ENCODE measurements at regions of chr17 and their contacts with region 1.

Region 1: GRCh38 chr17:65561394-65562205 is at the start of gene AXIN2:
- DNase-seq: peak; percentile 80
- H3K4me3 Mint-ChIP-seq: peak within 1 kb of the TSS; percentile 86
- H3K27ac Mint-ChIP-seq: peak within 1 kb of the TSS; percentile 52
- H3K4me1 Mint-ChIP-seq: peaks cover 31% of the 10 kb centered on the region
- H3K27me3 Mint-ChIP-seq: peaks cover 21% of the 10 kb centered on the region
- total RNA-seq, gene AXIN2: 4.9 and 5.6 TPM in 2 replicates

Region 2: DNA sequence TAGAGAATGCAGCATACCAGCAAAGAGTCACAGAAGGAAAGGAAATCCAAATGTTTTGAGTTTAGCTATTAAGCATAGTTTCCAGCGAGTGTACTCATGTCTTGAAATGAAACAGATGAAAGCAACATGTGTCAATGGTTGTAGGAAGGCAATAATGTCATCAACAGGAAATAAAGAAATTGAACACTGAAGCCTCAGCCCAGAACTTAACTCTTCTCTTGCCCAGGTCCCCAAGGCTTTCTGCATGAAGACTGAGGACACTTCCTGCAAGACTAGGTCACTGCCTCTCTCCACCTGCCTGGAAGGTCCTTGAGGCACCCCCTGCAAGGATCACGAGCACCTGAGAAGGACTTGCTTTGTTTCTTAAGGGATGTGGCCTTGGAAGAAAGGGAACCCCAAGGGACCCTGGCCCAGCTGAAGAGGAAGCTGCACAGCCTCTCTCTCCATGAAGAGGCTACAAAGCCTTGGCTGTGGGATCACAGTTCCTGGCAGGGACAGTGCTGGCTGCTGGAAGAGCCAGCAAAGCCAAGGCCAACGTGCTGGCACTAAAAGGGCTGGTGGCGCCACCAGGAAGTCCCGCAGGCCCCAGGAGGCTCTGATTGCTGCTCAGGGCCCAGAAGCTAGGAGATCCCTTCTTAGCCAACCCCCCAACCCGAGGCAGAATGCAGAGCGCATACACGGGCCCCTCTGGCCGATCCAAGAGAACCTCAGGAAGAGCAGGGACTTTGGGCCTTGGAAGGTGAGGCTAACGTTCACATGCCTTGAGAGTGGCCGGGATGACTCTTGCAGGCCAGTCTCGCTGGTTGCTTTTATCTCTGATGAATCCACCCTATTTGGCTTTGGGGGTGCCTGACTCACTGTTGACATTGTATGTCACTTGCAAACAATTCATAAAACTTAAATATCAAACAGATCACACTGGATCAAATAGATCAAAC is 23.3 kb after region 1 on chr17:
- intact Hi-C with region 1: loop called (anchors 2 kb)
- DNase-seq: no peak
- H3K4me3 Mint-ChIP-seq: no peak overlapping the region
- H3K27ac Mint-ChIP-seq: no peak overlapping the region
- H3K4me1 Mint-ChIP-seq: no peaks in the 10 kb centered on the region
- H3K27me3 Mint-ChIP-seq: no peaks in the 10 kb centered on the region

Region 3: DNA sequence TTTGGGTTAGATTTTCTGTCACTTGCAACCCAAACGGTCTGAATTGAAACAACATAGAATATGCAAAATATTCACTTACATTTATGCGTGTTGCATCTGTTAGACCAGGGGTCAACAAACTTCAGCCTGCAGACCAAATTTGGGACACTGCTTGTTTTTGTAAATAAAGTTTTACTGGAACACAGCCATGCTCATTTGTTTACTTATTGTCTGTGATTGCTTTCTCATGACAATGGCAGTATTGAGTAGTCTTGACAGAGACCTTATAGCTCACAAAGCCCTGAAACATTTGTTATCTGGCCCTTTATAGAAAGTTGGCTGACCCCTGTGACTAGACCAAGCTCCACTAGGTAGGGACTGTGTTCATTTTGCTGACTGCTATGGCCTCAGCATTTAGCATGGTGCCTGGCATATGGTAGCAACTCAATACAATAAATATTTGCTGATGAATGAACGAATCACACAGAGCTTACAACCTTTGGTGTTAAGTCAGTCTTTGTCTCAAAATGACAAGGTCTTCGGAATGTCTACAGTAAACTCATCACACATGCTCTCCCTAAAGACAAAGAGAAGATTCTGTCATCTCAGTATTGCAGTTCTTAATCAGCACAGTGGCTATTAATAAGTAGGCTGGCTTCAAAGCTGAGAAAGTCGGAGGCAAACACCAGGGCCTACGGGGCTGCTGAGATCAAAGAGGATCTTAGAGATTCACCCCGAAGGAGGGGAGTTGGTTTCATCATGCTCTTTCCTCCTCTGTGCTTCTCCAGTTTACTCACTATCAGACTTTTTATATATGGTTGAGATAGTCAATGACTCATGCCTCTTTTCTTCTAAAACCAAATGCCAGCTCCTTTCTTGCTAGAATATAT is 95.0 kb after region 1 on chr17:
- intact Hi-C with region 1: loop called (anchors 2 kb)
- DNase-seq: no peak
- H3K4me3 Mint-ChIP-seq: no peak overlapping the region
- H3K27ac Mint-ChIP-seq: no peak overlapping the region
- H3K4me1 Mint-ChIP-seq: no peaks in the 10 kb centered on the region
- H3K27me3 Mint-ChIP-seq: peaks cover 2% of the 10 kb centered on the region

Region 4: GRCh38 chr17:66165513-66166123 is 604.0 kb after region 1 on chr17:
- intact Hi-C with region 1: loop called (anchors 5 kb)
- DNase-seq: peak; percentile 4
- H3K4me3 Mint-ChIP-seq: no peak overlapping the region
- H3K27ac Mint-ChIP-seq: no peak overlapping the region
- H3K4me1 Mint-ChIP-seq: no peaks in the 10 kb centered on the region
- H3K27me3 Mint-ChIP-seq: no peaks in the 10 kb centered on the region